ENCODE measurements at regions of chr5 and their contacts with region 1.

Region 1: GRCh38 chr5:129652349-129653069 is 95.4 kb upstream of the MINAR2 start:
- DNase-seq: no peak
- H3K4me3 ChIP-seq: no peak overlapping the region
- CTCF ChIP-seq: no peak

Region 2: DNA sequence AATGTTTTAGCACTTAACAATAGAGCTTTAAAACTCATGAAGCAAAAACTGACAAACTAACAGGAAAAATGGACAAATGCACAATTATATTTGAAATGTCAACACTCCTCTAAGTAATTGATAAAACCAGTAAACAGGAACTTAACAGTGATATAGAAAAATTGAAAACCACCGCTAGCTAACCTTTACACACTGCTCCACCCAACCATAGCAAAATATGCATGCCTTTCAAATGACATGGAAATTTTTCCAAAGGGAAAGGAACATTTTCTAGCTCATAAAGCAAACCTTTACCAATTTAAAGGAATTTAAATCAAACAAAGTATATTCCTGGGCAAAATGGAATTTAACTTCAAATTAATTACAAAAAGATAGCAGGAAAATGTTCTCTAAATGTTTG is 83.2 kb before region 1 on chr5:
- in situ Hi-C with region 1: loop called (anchors 5 kb)
- DNase-seq: peak; percentile 8
- H3K4me3 ChIP-seq: no peak overlapping the region
- CTCF ChIP-seq: no peak

Region 3: DNA sequence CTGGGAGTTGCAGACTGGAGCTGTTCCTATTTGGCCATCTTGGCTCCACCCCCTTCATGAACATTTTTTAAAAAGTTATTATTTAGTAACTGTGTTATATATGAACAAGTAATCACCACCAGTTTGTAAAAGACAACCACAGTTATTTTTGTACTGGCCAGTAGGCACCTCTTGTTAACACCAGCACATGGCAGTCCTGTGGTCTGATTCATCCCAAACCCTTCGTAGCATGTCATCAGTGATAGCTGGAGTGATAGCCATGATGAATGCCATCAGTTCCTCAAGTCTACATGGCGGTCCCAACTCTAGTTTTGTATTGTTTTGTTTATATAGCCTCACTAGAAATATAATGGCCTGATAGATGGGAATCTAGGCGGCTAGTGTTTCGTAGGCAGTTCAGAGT is 1685.5 kb after region 1 on chr5:
- in situ Hi-C with region 1: no loop called
- DNase-seq: no peak
- H3K4me3 ChIP-seq: no peak overlapping the region
- CTCF ChIP-seq: no peak